GM18951 (cell line): ENCODE measurements at regions of chr16 and their contacts with region 1.

Region 1: DNA sequence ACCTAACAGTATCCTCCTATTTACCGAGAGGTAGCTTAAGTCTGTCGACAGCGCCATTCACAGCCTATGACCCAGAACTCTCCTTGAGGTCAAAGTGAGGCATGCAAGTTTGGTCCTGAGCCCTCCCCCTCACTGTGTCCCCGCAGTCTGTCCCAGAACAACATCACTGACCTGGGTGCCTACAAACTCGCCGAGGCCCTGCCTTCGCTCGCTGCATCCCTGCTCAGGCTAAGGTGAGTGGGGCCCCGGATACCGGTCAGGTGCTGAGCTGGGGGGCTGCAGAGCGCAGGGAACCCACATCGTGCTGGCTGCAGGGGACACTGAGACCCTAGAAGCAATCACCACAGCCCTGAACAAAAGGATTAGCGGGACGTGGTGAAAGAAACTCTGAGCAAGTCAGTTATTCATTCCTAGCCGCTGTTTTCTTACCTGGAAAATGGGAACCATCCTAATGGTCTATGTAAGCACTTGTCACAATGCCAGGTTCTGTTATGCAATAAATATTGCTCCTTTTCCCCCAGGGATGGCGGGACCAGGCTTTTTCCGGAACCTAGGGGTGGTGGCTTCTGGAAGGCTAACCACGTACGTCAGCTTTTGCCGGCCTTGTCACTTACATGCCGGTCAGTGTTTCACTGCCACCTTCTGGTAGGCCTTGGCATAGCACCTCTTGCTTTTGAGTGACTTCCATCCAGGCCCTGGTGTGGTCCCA is 23.8 kb downstream of the DEXI start:
- POLR2A ChIP-seq: peak; percentile 31

Region 2: GRCh38 chr16:10266809-10267208 is 651.6 kb before region 1 on chr16:
- in situ Hi-C with region 1: no loop called
- POLR2A ChIP-seq: no peak

Region 3: GRCh38 chr16:10521681-10522274 is 396.7 kb before region 1 on chr16:
- in situ Hi-C with region 1: loop called (anchors 10 kb)
- POLR2A ChIP-seq: no peak

Region 4: DNA sequence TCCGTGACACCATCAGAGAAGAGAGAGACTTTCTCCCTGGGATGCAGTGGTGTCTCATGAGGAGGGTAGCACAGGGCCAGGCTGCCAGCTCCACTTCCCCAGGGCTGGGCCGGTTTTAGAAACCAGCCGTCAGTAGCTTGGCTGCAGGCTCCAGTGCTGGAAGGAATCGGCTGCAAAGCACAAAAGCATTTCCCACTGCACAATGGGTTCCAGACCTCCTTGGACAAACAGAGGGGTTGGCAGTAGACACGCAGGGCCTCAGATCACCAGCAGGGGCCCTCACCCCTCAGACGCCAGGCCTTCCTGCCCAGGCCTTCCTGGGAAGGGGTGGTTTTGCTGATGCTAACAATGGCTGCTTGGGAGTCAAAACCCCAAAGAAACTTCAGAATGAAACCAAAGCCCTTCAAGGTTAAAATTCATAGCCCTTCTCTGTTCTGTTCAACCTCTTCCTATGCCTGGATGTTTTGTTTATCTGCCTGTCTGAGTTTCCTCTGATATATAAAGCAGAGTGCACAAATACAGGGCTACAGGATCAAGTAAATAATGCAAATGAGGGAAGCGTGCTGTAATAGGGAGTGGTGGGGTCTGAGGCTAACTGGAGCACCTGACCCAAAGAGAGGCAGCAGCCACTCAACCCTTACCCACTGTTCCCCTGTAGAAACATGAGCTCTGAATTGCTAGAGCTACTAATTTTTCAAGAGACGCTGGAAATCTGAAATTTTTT is 250.0 kb before region 1 on chr16:
- in situ Hi-C with region 1: no loop called
- POLR2A ChIP-seq: no peak

Region 5: GRCh38 chr16:10743610-10744393 is 174.6 kb before region 1 on chr16 and contains the start of gene NUBP1:
- in situ Hi-C with region 1: no loop called
- POLR2A ChIP-seq: peak; percentile 84